Heart left ventricle (tissue), 16 donors: ENCODE measurements at regions of chr1 and their contacts with region 1.

Region 1: DNA sequence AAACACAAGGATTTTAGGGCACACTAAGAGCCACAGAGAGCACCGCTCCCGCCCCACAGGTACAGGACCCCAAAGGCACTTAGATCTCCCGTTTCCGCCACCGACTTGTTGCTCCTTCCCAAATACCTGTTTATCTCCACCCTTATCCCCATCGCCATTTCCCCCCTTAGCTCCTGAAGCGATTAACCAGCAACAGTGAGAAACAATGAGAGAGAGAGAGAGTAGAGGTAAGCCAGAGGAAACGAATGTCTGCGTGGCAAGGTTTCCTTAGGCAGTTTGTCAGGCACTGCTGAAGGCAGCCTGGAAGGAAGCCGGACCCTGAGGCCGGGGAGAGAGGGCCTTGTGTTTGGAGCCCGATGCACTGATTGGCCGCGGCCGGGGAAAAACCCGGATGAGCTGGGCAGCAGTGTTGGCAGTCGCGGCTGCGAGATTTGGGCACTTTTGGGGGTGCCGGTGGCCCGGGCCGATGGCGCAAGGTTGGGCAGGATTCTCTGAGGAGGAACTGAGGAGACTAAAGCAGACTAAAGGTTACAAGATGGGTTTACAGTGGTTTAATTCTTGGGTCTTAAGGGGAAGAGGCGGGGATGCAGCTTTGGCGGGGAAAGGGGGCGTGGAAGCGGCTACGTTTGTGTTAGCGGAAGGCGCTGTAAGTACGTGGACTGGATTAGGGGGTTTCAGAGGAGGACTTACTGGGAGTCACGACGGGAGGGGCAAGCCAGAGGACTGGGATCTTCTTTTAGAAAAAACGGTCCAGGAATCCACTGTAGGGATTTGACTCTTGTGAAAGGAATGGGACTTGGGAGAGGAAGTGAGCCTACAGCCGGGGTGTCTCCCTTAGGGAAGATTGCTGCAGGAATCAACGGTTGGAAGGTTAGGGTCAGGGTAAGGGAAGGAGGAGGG is at the start of gene GORAB:
- DNase-seq: peak; percentile 92 to 95 (median 93)
- ATAC-seq: peak; percentile 99
- H3K4me3 ChIP-seq: peak within 1 kb of the TSS; percentile 36 to 82 (median 72)
- H3K27ac ChIP-seq: peak within 1 kb of the TSS; percentile 89 to 96 (median 92)
- H3K4me1 ChIP-seq: peaks cover 0 to 28% (median 17%) of the 10 kb centered on the region in 12 donors
- H3K27me3 ChIP-seq: no peaks in the 10 kb centered on the region
- CTCF ChIP-seq: no peak
- POLR2A ChIP-seq: peak; percentile 37 to 80
- total RNA-seq, gene GORAB: 4.7 to 15.5 (median 7.6) TPM

Region 2: DNA sequence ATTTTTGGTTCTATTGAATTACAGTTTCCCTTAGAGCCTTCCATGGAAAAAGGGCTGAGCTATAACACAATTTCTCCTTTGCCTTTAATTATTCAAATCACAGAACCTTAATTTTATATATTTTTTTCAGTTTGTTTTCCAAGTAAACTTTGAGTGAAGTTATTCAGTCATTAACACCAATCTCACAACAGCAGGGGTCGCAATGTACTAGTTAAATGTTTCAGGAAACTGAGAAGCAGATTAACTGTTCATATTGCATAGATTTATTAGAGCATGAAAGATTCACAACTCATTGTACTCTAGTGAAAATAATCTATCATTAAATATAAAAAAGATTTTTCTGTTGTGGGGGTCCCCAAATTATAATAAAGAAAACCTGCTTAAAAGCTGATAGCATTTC is 521.6 kb before region 1 on chr1:
- intact Hi-C with region 1: loop called in 1 of 10 experiments (anchors 10 kb)
- DNase-seq: peak in 4 of 5 donors; percentile 25 to 40 (median 32)
- ATAC-seq: no peak
- H3K4me3 ChIP-seq: no peak overlapping the region
- H3K27ac ChIP-seq: no peak overlapping the region
- H3K4me1 ChIP-seq: no peaks in the 10 kb centered on the region
- H3K27me3 ChIP-seq: no peaks in the 10 kb centered on the region
- CTCF ChIP-seq: peak; percentile 7 to 66 (median 50)
- POLR2A ChIP-seq: no peak

Region 3: GRCh38 chr1:170145770-170146676 is 386.0 kb before region 1 on chr1 and contains the start of gene NTMT2:
- intact Hi-C with region 1: loop called in 4 of 10 experiments (anchors 5 to 10 kb)
- DNase-seq: peak; percentile 64 to 83 (median 72)
- ATAC-seq: peak; percentile 93 to 99 (median 97)
- H3K4me3 ChIP-seq: peak within 1 kb of the TSS in 10 of 12 donors; percentile 7 to 49 (median 34)
- H3K27ac ChIP-seq: peak within 1 kb of the TSS; percentile 56 to 97 (median 83)
- H3K4me1 ChIP-seq: peaks cover 0 to 24% (median 5%) of the 10 kb centered on the region in 12 donors
- H3K27me3 ChIP-seq: no peaks in the 10 kb centered on the region
- CTCF ChIP-seq: no peak
- POLR2A ChIP-seq: no peak
- total RNA-seq, gene NTMT2: 0.56 to 3.6 (median 2.0) TPM

Region 4: DNA sequence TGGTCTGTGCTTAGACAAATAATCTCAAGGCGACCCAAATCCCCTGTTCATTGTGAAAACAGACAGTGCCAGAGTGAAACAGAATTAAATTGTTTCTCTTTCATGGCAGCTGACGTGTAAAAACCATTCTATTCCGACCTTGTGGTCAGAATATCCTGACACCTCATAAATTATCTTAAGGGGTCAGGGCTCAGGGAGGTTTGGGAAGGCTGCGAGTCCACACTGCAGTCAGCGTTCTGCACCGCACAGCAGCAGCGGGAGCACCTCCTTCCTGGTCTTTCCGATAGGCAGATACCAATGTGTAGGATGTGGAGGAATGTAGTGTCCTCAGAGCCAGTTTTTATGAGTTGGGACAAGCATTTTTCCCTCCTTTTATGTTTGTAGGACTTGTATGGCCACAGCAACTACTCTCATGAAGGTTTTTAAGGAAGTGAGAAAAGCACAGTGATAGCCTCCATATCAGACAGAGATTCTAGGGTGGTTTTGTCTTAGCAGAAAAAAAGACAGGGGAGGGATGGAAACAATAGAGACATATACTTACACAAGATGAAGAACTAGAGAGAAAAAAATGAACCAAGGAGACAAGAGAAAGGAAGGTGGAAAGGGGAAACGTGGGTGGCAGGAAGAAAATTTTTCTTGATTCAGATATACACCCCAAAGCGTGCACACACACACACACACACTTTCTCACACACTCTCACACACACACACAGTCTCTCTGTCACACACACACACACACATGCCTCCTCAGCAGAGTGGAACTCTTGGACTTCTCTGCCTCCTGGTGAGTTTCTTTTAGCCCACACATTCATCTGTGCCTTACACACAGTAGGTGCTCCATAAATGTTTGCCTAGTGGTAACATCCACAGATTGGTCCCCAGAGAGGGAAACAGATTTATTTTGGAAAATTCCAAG is 317.6 kb before region 1 on chr1:
- intact Hi-C with region 1: loop called in 1 of 10 experiments (anchors 10 kb)
- DNase-seq: no peak
- ATAC-seq: peak in 3 of 4 donors; percentile 22 to 57 (median 35)
- H3K4me3 ChIP-seq: no peak overlapping the region
- H3K27ac ChIP-seq: peak overlapping the region in 7 of 12 donors; percentile 22 to 78 (median 58)
- H3K4me1 ChIP-seq: peaks cover 0 to 26% (median 4%) of the 10 kb centered on the region in 12 donors
- H3K27me3 ChIP-seq: no peaks in the 10 kb centered on the region
- CTCF ChIP-seq: no peak
- POLR2A ChIP-seq: no peak

Region 5: GRCh38 chr1:170494369-170494768 is 37.6 kb before region 1 on chr1:
- intact Hi-C with region 1: loop called in 1 of 10 experiments (anchors 2 kb)
- DNase-seq: peak in 4 of 5 donors; percentile 23 to 37 (median 29)
- ATAC-seq: peak in 3 of 4 donors; percentile 82 to 92 (median 86)
- H3K4me3 ChIP-seq: no peak overlapping the region
- H3K27ac ChIP-seq: peak overlapping the region in 1 of 12 donors; percentile 13
- H3K4me1 ChIP-seq: peaks cover 0 to 19% (median 12%) of the 10 kb centered on the region in 12 donors
- H3K27me3 ChIP-seq: no peaks in the 10 kb centered on the region
- CTCF ChIP-seq: no peak
- POLR2A ChIP-seq: no peak

Region 6: GRCh38 chr1:170765712-170766330 is 233.8 kb after region 1 on chr1:
- intact Hi-C with region 1: loop called in 1 of 10 experiments (anchors 5 kb)
- DNase-seq: no peak
- ATAC-seq: peak in 3 of 4 donors; percentile 45 to 71 (median 49)
- H3K4me3 ChIP-seq: no peak overlapping the region
- H3K27ac ChIP-seq: no peak overlapping the region
- H3K4me1 ChIP-seq: peaks cover 0 to 6% (median 0%) of the 10 kb centered on the region in 12 donors
- H3K27me3 ChIP-seq: no peaks in the 10 kb centered on the region
- CTCF ChIP-seq: peak; percentile 33 to 72 (median 56)
- POLR2A ChIP-seq: no peak